Activated CD8-positive, alpha-beta T cell treated with anti-CD3 and anti-CD28 coated beads for 36 hours (primary cell): ENCODE measurements at regions of chr18 and their contacts with region 1.

Region 1: GRCh38 chr18:12391618-12392165 is 14.7 kb upstream of the AFG3L2 start:
- DNase-seq: peak; percentile 72
- ATAC-seq: peak; percentile 98
- H3K4me3 Mint-ChIP-seq: no peak overlapping the region
- H3K27ac Mint-ChIP-seq: no peak overlapping the region
- H3K4me1 Mint-ChIP-seq: no peaks in the 10 kb centered on the region
- H3K27me3 Mint-ChIP-seq: peaks cover 4% of the 10 kb centered on the region
- CTCF ChIP-seq: peak; percentile 93

Region 2: DNA sequence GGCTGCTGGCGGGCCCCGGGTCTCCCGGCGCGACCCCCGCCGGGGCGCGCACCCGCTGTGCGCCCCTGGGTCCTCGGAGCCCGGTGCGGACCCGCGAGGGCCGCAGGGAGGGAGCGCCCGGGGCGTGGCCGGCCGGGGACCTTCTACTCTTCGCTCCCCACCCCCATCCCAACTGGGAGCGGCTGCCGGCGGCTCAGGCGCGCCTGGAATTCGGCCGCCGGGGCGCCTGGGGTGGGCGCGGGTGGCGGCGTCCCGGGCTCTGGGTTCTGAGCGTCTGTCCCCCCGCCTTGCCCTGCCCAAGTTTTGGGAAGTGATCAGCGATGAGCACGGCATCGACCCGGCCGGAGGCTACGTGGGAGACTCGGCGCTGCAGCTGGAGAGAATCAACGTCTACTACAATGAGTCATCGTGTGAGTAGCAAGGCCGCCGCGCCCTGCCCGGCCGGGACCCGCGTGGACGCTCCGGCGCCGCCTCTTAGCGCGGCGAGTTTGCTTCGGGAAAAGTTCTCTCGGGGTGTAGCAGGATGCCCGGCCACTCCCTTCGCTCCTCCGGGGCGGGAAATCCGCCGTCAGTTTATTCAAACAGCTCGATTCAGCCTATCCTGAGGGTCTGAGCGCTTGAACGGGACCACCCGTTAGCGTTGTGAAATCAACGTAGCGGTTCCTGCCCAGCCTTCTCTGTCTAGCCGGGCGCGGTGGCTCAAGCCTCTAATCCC is 83.1 kb before region 1 on chr18:
- CTCF ChIA-PET with region 1: no interaction called
- POLR2A ChIA-PET with region 1: no interaction called
- intact Hi-C with region 1: no loop called
- DNase-seq: peak; percentile 61
- ATAC-seq: peak; percentile 67
- H3K4me3 Mint-ChIP-seq: peak overlapping the region; percentile 65
- H3K27ac Mint-ChIP-seq: no peak overlapping the region
- H3K4me1 Mint-ChIP-seq: peaks cover 12% of the 10 kb centered on the region
- H3K27me3 Mint-ChIP-seq: peaks cover 40% of the 10 kb centered on the region
- CTCF ChIP-seq: no peak

Region 3: GRCh38 chr18:12336875-12337274 is 54.8 kb before region 1 on chr18:
- CTCF ChIA-PET with region 1: no interaction called
- POLR2A ChIA-PET with region 1: no interaction called
- intact Hi-C with region 1: no loop called
- DNase-seq: no peak
- ATAC-seq: no peak
- H3K4me3 Mint-ChIP-seq: no peak overlapping the region
- H3K27ac Mint-ChIP-seq: no peak overlapping the region
- H3K4me1 Mint-ChIP-seq: no peaks in the 10 kb centered on the region
- H3K27me3 Mint-ChIP-seq: no peaks in the 10 kb centered on the region
- CTCF ChIP-seq: no peak

Region 4: GRCh38 chr18:12403601-12404506 is 12.2 kb after region 1 on chr18:
- CTCF ChIA-PET with region 1: interaction called, 38 read pairs
- POLR2A ChIA-PET with region 1: no interaction called
- intact Hi-C with region 1: no loop called
- DNase-seq: no peak
- ATAC-seq: no peak
- H3K4me3 Mint-ChIP-seq: no peak overlapping the region
- H3K27ac Mint-ChIP-seq: no peak overlapping the region
- H3K4me1 Mint-ChIP-seq: peaks cover 27% of the 10 kb centered on the region
- H3K27me3 Mint-ChIP-seq: peaks cover 30% of the 10 kb centered on the region
- CTCF ChIP-seq: no peak

Region 5: DNA sequence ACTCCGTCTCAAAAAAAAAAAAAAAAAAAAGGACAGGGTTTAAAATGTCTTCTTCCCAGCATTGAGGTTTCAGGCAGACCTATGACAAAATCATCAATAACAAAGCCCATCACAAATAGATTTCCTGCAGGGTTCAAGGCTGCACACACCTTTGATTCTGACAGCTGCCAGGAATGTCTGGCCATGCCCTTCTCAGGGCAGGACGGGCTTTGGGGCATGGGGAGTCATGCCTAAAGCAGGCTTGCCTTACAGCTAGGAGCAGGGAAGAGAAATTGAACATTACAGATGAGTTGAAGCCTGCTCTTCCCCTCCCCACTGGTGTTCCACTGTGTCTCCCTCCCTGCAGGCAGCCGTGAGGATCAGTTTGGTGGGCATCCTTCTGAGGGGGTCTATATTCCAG is 19.8 kb after region 1 on chr18:
- CTCF ChIA-PET with region 1: interaction called, 38 read pairs
- POLR2A ChIA-PET with region 1: no interaction called
- intact Hi-C with region 1: no loop called
- DNase-seq: no peak
- ATAC-seq: no peak
- H3K4me3 Mint-ChIP-seq: no peak overlapping the region
- H3K27ac Mint-ChIP-seq: no peak overlapping the region
- H3K4me1 Mint-ChIP-seq: peaks cover 18% of the 10 kb centered on the region
- H3K27me3 Mint-ChIP-seq: peaks cover 3% of the 10 kb centered on the region
- CTCF ChIP-seq: no peak

Region 6: GRCh38 chr18:12657684-12658425 is 266.2 kb after region 1 on chr18 and contains the start of gene SPIRE1:
- CTCF ChIA-PET with region 1: interaction called, 36 read pairs
- POLR2A ChIA-PET with region 1: no interaction called
- intact Hi-C with region 1: loop called (anchors 2 kb)
- DNase-seq: peak; percentile 33
- ATAC-seq: peak; percentile 52
- H3K4me3 Mint-ChIP-seq: peak within 1 kb of the TSS; percentile 76
- H3K27ac Mint-ChIP-seq: no peak within 1 kb of the TSS
- H3K4me1 Mint-ChIP-seq: peaks cover 17% of the 10 kb centered on the region
- H3K27me3 Mint-ChIP-seq: peaks cover 27% of the 10 kb centered on the region
- CTCF ChIP-seq: no peak
- total RNA-seq, gene SPIRE1: 2.8 to 4.4 TPM